HepG2 (cell line): ENCODE measurements at regions of chr2 and their contacts with region 1.

Region 1: DNA sequence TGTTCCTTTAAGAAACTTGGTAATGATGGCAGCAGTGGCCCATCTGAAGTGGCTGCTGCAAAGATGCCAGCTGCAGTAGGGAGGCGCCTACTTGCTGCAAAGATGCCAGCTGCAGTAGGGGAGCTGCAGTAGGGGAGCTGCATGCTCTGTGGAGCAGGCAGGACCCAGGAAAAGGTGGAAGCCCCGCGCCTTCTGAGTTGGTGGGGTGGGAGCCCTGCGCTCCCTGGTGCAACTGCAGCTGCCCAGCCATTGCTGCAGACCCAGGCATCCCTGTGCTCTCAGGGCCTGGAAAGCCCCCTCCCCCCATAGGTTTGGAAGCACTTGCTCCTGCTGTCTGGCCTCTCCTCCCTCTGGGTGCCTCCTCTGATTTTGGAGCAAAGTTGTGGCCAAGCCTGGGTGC is 155.3 kb downstream of the DPP4 start:
- DNase-seq: no peak
- ATAC-seq: no peak
- H3K4me3 ChIP-seq: no peak overlapping the region
- H3K27ac ChIP-seq: no peak overlapping the region
- H3K4me1 ChIP-seq: no peaks in the 10 kb centered on the region
- H3K27me3 ChIP-seq: no peaks in the 10 kb centered on the region
- CTCF ChIP-seq: no peak
- EP300 ChIP-seq: no peak
- POLR2A ChIP-seq: no peak
- RAD21 ChIP-seq: no peak

Region 2: DNA sequence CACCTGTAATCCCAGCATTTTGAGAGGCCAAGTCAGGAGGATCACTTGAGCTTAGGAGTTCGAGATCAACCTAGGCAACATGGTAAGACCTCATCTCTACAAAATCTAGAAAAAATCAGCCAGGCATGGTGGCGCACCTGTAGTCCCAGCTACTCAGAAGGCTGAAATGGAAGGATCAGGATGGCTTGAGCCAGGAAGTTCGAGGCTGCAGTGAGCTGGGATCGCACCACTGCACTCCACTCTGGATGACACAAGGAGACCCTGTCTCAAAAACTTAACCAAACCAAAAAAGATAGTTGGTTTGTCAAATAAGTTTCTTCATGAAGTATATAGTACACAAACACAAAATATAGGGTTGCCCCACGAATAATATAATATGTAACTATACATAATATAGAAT is 42.3 kb before region 1 on chr2:
- CTCF ChIA-PET with region 1: no interaction called
- POLR2A ChIA-PET with region 1: no interaction called
- in situ Hi-C with region 1: no loop called
- intact Hi-C with region 1: loop called (anchors 1 kb)
- DNase-seq: no peak
- ATAC-seq: no peak
- H3K4me3 ChIP-seq: no peak overlapping the region
- H3K27ac ChIP-seq: no peak overlapping the region
- H3K4me1 ChIP-seq: no peaks in the 10 kb centered on the region
- H3K27me3 ChIP-seq: no peaks in the 10 kb centered on the region; a peak in 1 of 5 replicates
- CTCF ChIP-seq: no peak
- EP300 ChIP-seq: no peak
- POLR2A ChIP-seq: no peak
- RAD21 ChIP-seq: no peak